MCF 10A (cell line): ENCODE measurements at regions of chr18 and their contacts with region 1.

Region 1: GRCh38 chr18:57446322-57446721 is 11.1 kb downstream of the ONECUT2 start:
- DNase-seq: peak; percentile 45
- H3K4me3 Mint-ChIP-seq: no peak overlapping the region
- H3K27ac Mint-ChIP-seq: no peak overlapping the region
- H3K4me1 Mint-ChIP-seq: peaks cover 10% of the 10 kb centered on the region
- H3K27me3 Mint-ChIP-seq: peaks cover 67% of the 10 kb centered on the region
- CTCF ChIP-seq: peak; percentile 77

Region 2: GRCh38 chr18:56748698-56749268 is 697.5 kb before region 1 on chr18:
- CTCF ChIA-PET with region 1: interaction called, 7 read pairs
- POLR2A ChIA-PET with region 1: no interaction called
- intact Hi-C with region 1: loop called (anchors 1 kb)
- DNase-seq: peak; percentile 43
- H3K4me3 Mint-ChIP-seq: no peak overlapping the region
- H3K27ac Mint-ChIP-seq: no peak overlapping the region
- H3K4me1 Mint-ChIP-seq: no peaks in the 10 kb centered on the region
- H3K27me3 Mint-ChIP-seq: no peaks in the 10 kb centered on the region
- CTCF ChIP-seq: peak; percentile 60

Region 3: DNA sequence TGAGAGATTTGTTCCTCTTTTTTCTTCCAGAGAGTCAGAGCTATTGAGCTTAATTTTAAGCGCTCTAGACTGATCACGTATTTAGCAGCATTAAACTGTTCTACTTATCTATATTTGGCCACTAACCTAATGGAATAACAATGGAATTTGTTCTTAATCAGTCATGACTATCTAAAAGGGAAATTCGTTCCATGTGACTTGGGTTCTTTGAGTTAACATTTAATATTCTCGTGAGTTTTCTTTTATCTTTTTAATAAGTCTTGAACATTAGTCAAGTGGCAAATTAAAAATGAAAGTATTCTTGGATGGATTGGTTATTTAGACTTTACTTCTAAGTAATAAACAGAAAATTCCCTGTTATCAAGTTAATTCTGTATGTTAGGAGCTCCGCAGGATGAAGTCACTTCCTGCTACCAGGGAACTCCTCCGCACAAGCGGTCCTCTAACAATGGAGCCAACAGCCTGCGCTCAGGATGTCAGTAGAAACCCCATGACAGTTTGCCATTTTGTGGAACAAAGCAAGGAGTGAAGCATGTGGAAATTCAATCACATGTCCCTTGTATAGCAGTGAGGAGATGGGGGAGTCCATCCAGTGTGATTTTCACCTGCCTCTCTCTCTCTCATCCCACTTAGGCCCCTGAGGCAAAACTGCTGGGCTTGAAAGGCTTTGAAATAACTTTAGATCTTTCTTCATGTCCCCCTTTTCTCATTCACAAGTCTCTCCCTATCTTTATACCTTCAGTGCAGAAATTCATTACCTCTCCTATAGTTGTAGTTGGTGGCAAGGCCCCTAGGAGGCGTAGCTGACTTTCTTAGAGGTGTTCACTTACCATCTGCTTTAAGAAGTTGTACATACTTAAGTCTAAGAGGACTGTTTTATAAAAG is 657.1 kb before region 1 on chr18:
- CTCF ChIA-PET with region 1: interaction called, 8 read pairs
- POLR2A ChIA-PET with region 1: no interaction called
- intact Hi-C with region 1: loop called (anchors 1 kb)
- DNase-seq: peak; percentile 59
- H3K4me3 Mint-ChIP-seq: no peak overlapping the region
- H3K27ac Mint-ChIP-seq: no peak overlapping the region
- H3K4me1 Mint-ChIP-seq: no peaks in the 10 kb centered on the region
- H3K27me3 Mint-ChIP-seq: no peaks in the 10 kb centered on the region
- CTCF ChIP-seq: peak; percentile 51

Region 4: DNA sequence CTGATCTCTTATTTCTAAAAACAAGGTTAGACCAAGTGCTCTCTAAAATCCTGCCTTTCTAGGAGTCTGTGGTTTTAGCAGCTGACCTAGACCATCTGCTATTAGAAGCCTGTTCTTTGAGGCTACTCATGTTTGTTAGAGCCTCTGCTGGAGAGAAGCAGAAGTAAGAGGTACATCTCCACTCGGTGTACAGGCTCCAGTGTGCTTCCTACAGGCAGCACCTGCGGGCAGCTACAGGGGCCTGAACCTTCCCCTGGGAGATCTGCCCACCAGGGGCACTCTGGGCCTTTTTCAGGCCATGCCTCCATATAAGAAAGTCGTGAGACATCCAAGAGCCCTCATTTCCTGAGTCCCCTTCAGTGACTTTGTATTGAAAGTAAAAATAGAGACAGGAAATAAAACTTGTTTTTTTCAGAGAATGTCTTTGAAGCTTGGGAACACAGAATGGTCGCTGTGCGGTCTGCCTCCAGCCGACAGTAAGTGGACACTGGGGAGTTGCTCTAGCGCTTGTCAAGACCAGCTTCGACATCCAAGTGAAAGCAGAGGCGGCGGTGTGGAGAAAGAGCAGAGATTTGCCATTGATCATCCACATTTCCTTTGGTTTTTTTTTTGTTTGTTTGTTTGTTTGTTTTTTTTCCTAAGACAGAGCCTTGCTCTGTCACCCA is 20.6 kb after region 1 on chr18:
- CTCF ChIA-PET with region 1: no interaction called
- POLR2A ChIA-PET with region 1: no interaction called
- intact Hi-C with region 1: no loop called
- DNase-seq: no peak
- H3K4me3 Mint-ChIP-seq: no peak overlapping the region
- H3K27ac Mint-ChIP-seq: no peak overlapping the region
- H3K4me1 Mint-ChIP-seq: no peaks in the 10 kb centered on the region
- H3K27me3 Mint-ChIP-seq: peaks cover 18% of the 10 kb centered on the region
- CTCF ChIP-seq: no peak